ENCODE measurements at regions of chr15 and their contacts with region 1.

Region 1: GRCh38 chr15:77773906-77774305 is 141.2 kb upstream of the LINGO1 start:
- DNase-seq: no peak
- H3K4me3 ChIP-seq: no peak overlapping the region
- H3K27ac ChIP-seq: no peak overlapping the region
- H3K4me1 ChIP-seq: no peaks in the 10 kb centered on the region
- H3K27me3 ChIP-seq: peaks cover 0 to 6% (median 0%) of the 10 kb centered on the region in 3 donors
- CTCF ChIP-seq: no peak
- EP300 ChIP-seq: no peak
- POLR2A ChIP-seq: no peak

Region 2: DNA sequence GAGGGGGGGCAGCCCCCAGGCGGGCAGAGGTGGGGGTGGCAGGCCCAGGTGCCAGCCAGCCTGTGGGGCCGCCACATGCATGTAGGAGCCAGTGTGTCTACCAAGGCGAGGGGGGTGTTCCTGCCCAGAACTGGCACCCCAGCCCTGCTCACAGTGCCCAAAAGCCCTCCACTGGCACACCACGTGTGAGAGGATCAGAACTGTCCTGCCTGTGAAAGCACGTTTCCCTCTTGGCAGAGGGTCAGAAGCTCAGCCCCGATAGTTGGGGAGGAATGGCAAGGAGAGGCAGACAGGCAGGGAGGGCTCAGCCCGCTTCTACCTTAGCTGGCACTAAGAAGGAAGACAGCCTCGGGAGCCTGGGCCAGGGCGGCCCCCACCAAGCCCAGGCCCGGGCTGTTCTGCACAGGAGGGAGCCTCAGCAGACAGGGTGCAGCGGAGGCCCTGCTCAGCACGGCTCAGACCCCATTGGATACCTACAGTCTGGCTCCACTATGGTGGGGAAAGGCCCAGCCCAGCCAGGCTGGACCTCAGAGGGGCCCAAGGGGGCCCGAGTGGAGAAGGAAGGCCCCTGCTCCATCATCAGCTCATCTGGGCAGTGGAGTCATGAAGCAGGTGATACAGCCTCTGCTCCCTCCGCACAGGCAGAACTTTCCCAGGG is 56.4 kb before region 1 on chr15:
- intact Hi-C with region 1: loop called (anchors 10 kb)
- DNase-seq: no peak
- H3K4me3 ChIP-seq: no peak overlapping the region
- H3K27ac ChIP-seq: no peak overlapping the region
- H3K4me1 ChIP-seq: peaks cover 0 to 11% (median 5%) of the 10 kb centered on the region in 4 donors
- H3K27me3 ChIP-seq: peaks cover 0 to 14% (median 0%) of the 10 kb centered on the region in 3 donors
- CTCF ChIP-seq: no peak
- EP300 ChIP-seq: no peak
- POLR2A ChIP-seq: no peak